ENCODE measurements at regions of chr5 and their contacts with region 1.

Region 1: DNA sequence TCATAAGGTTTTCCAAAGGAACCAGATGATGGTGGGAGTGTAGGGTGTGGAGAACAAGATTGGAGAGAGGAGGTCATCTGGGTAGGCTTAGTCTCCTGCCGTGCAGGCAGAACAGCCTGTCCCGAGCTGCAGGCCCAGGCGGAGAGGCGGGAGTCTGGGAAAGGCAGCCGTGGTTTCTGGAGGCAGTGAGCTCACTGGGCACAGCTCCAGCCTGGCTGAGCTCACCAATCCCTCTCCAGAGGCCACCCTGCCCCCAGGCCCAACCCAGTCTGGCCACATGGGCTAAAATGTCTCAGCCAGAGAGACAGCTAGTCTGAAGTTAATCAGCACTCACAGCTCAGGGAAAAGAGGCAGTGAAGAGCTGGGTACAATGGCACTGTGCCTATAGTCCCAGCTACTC is 12.3 kb downstream of the P4HA2 start:
- DNase-seq: no peak
- CTCF ChIP-seq: no peak

Region 2: GRCh38 chr5:132227485-132228240 is 12.3 kb after region 1 on chr5 and contains the start of gene P4HA2:
- CTCF ChIA-PET with region 1: interaction called, 78 read pairs
- POLR2A ChIA-PET with region 1: interaction called, 7 read pairs
- DNase-seq: peak; percentile 94
- CTCF ChIP-seq: no peak